ENCODE measurements at regions of chr7 and their contacts with region 1.

Region 1: GRCh38 chr7:44059219-44060090 is 5.9 kb downstream of the PGAM2 start:
- DNase-seq: no peak
- H3K4me3 ChIP-seq: no peak overlapping the region
- H3K27ac ChIP-seq: no peak overlapping the region
- H3K4me1 ChIP-seq: peaks cover 17% of the 10 kb centered on the region
- H3K27me3 ChIP-seq: no peaks in the 10 kb centered on the region
- CTCF ChIP-seq: no peak

Region 2: GRCh38 chr7:44103923-44104859 is 44.7 kb after region 1 on chr7 and contains the start of gene AEBP1:
- CTCF ChIA-PET with region 1: no interaction called
- dilution Hi-C with region 1: loop called (anchors 5 kb)
- in situ Hi-C with region 1: no loop called
- intact Hi-C with region 1: no loop called
- DNase-seq: no peak
- H3K4me3 ChIP-seq: no peak within 1 kb of the TSS
- H3K27ac ChIP-seq: no peak within 1 kb of the TSS
- H3K4me1 ChIP-seq: peaks cover 22% of the 10 kb centered on the region
- H3K27me3 ChIP-seq: no peaks in the 10 kb centered on the region
- CTCF ChIP-seq: no peak
- total RNA-seq, gene AEBP1: 0.24 to 16.7 TPM

Region 3: GRCh38 chr7:44194069-44194468 is 134.6 kb after region 1 on chr7:
- CTCF ChIA-PET with region 1: no interaction called
- dilution Hi-C with region 1: loop called (anchors 5 kb)
- in situ Hi-C with region 1: no loop called
- intact Hi-C with region 1: no loop called
- DNase-seq: peak; percentile 44
- H3K4me3 ChIP-seq: no peak overlapping the region
- H3K27ac ChIP-seq: no peak overlapping the region
- H3K4me1 ChIP-seq: peaks cover 3% of the 10 kb centered on the region
- H3K27me3 ChIP-seq: no peaks in the 10 kb centered on the region
- CTCF ChIP-seq: no peak